Activated naive CD4-positive, alpha-beta T cell treated with anti-CD3 and anti-CD28 coated beads for 36 hours (primary cell): ENCODE measurements at regions of chr16 and their contacts with region 1.

Region 1: DNA sequence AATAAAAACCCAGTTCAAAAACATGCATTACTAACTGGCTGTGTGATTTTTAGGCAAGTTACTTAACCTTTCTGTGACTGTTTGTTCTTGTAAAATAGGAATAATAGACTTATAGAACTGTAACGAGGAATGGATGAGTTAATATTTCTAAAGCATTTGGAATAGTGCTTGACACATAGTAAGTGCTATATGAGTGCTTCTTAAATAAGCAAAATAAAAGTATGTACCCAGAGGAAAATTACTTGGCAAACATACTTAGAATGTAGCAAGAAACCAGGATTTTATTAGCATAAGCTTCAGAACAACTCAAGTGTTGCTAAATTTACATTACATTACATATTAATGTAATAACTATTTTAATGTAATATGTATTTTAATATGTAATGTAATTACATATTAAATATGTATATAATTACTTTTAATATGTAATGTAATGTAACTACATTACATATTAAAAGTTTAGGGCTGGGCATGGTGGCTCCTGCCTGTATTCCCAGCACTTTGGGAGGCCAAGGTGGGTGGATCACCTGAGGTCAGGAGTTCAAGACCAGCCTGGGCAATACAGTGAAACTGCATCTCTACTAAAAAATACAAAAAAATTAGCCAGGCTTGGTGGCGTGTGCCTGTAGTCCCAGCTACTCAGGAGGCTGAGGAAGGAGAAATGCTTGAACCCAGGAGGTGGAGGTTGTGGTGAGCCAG is 14.2 kb downstream of the NFAT5 start:
- DNase-seq: no peak
- H3K4me3 Mint-ChIP-seq: no peak overlapping the region
- H3K27ac Mint-ChIP-seq: no peak overlapping the region
- H3K4me1 Mint-ChIP-seq: peaks cover 40% of the 10 kb centered on the region
- H3K27me3 Mint-ChIP-seq: no peaks in the 10 kb centered on the region

Region 2: DNA sequence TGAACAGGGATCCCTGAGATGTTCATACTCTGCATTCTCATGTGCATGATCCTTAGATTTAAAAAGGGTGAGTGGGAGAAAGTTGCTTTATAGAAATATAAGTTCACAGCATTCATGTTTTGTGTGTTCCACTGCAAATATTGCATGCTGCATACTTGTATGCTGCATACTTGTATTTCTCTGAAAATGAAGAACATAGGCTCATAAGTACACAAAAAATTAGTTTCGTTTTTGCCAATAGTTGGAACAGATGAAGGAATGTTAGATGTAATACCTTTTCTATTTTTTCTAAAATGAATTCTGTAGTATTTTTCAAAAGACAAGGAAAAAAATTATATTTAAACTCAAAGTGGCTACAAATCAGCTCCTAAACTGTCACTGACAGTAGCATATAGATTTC is 64.9 kb after region 1 on chr16:
- CTCF ChIA-PET with region 1: no interaction called
- intact Hi-C with region 1: loop called (anchors 10 kb)
- DNase-seq: no peak
- H3K4me3 Mint-ChIP-seq: no peak overlapping the region
- H3K27ac Mint-ChIP-seq: no peak overlapping the region
- H3K4me1 Mint-ChIP-seq: no peaks in the 10 kb centered on the region
- H3K27me3 Mint-ChIP-seq: no peaks in the 10 kb centered on the region